ENCODE measurements at regions of chr5 and their contacts with region 1.

Region 1: DNA sequence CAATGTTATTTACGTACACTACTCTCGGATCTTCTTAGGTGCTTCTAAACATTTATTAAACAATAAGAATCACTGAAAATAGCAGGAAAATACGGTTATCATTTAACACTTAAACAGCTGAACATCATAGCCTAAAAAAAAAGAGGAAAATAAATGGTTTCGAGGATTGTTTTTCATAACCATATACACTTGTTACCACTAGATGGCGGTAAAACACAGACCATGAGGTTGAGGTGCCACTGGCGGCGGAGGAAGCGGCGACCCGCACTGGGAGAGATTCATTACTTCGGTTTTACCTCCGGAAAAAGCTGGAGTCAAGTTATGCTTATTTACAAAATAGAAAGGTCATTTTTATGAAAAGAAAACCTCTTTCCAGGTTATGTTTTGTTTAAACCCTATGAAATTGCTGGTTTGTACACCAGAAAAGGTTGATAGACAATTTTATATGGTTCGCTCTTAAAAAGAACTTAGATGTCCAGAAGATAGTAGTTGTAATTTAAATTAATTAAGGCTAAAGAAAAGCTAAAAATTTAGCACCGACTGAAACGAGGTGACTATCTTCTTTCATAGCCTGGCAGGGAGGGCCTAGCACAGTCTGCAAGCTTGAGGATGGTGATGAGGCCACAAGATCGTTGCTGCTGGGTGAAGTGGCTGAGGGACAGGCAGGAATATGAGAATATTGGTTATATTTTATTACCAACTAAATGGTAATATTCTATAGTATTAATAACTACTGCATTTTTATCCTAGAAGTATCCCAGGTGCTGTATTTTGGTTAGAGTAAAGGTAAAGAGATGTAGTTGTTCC is 605.7 kb downstream of the RAB3C start:
- DNase-seq: peak; percentile 73
- H3K4me3 ChIP-seq: peak overlapping the region in 1 of 3 experiments; percentile 33
- H3K27ac ChIP-seq: no peak overlapping the region
- H3K4me1 ChIP-seq: peaks cover 4% of the 10 kb centered on the region
- H3K27me3 ChIP-seq: no peaks in the 10 kb centered on the region
- CTCF ChIP-seq: peak; percentile 47 to 55
- POLR2A ChIP-seq: no peak

Region 2: GRCh38 chr5:59206132-59206581 is 17.5 kb after region 1 on chr5:
- CTCF ChIA-PET with region 1: interaction called, 13 read pairs
- POLR2A ChIA-PET with region 1: no interaction called
- dilution Hi-C with region 1: no loop called
- intact Hi-C with region 1: no loop called
- DNase-seq: peak; percentile 55
- H3K4me3 ChIP-seq: no peak overlapping the region
- H3K27ac ChIP-seq: no peak overlapping the region
- H3K4me1 ChIP-seq: peaks cover 14% of the 10 kb centered on the region
- H3K27me3 ChIP-seq: no peaks in the 10 kb centered on the region
- CTCF ChIP-seq: no peak
- POLR2A ChIP-seq: no peak

Region 3: GRCh38 chr5:59238126-59238902 is 49.7 kb after region 1 on chr5:
- CTCF ChIA-PET with region 1: interaction called, 12 read pairs
- POLR2A ChIA-PET with region 1: no interaction called
- dilution Hi-C with region 1: no loop called
- intact Hi-C with region 1: no loop called
- DNase-seq: no peak
- H3K4me3 ChIP-seq: no peak overlapping the region
- H3K27ac ChIP-seq: no peak overlapping the region
- H3K4me1 ChIP-seq: peaks cover 25% of the 10 kb centered on the region
- H3K27me3 ChIP-seq: no peaks in the 10 kb centered on the region
- CTCF ChIP-seq: no peak
- POLR2A ChIP-seq: no peak

Region 4: DNA sequence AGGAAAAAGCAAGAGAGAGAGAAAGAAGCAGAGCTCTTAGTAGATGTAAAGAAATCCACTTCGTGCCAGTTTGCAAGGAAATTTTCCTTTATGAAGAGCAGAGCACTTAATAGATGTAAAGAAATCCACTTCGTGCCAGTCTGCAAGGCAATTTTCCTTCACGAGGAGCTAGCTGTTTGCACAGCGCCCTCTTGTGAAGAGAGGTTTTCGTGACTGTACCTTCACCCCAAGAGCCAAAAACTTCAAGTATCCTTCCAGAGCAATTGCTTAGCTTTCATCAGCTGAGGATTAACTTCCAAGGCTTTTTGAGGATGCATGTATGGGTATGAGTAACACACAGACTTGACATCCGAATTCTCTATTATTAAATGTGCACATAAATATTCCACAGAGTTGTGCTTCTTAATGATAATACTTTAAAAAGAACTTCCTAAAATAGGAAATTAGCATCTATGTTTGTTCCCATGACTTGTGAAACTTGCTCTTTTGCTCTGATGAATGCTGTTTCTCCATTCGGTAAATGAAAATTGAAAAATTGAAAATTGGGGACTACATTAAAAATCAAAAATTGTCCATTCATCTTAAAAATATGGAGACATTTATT is 179.3 kb after region 1 on chr5:
- CTCF ChIA-PET with region 1: interaction called, 193 read pairs
- POLR2A ChIA-PET with region 1: no interaction called
- dilution Hi-C with region 1: no loop called
- intact Hi-C with region 1: loop called (anchors 1 kb)
- DNase-seq: peak; percentile 75
- H3K4me3 ChIP-seq: no peak overlapping the region
- H3K27ac ChIP-seq: no peak overlapping the region
- H3K4me1 ChIP-seq: no peaks in the 10 kb centered on the region
- H3K27me3 ChIP-seq: peaks cover 0 to 2% of the 10 kb centered on the region in 2 experiments
- CTCF ChIP-seq: peak; percentile 75 to 79
- POLR2A ChIP-seq: no peak

Region 5: DNA sequence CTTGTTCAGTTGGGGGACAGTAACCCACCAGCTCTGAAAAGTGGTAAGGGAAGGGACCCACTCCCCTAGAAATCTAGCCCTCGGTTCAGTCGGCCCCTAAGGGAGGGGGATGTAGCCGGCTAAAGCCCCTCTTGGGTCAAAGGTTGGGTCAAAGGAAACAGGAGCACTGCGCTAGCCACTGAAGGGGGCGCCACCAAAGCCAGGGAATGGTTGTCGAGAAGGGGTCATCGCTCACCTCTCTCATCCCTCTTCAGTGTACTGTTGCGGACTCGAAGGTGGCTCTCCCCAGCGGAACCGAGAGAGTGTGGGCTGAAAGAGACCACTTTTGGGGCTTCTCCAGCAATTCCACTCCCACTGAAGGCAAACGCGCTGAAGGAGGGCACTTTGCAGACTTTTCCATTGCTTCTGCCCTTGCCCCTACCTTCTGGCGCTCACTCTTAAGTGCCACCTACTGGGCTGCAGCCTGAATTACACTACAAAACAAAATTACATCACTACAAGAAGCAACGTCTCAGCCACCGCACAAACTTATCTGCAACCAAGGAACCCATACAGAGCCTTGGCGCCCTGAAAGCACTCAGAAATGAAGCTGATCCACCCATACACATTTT is 308.0 kb after region 1 on chr5:
- CTCF ChIA-PET with region 1: interaction called, 11 read pairs
- POLR2A ChIA-PET with region 1: no interaction called
- dilution Hi-C with region 1: no loop called
- intact Hi-C with region 1: no loop called
- DNase-seq: peak; percentile 11
- H3K4me3 ChIP-seq: no peak overlapping the region
- H3K27ac ChIP-seq: no peak overlapping the region
- H3K4me1 ChIP-seq: no peaks in the 10 kb centered on the region
- H3K27me3 ChIP-seq: peaks cover 0 to 2% of the 10 kb centered on the region in 2 experiments
- CTCF ChIP-seq: peak; percentile 43 to 50
- POLR2A ChIP-seq: no peak

Region 6: DNA sequence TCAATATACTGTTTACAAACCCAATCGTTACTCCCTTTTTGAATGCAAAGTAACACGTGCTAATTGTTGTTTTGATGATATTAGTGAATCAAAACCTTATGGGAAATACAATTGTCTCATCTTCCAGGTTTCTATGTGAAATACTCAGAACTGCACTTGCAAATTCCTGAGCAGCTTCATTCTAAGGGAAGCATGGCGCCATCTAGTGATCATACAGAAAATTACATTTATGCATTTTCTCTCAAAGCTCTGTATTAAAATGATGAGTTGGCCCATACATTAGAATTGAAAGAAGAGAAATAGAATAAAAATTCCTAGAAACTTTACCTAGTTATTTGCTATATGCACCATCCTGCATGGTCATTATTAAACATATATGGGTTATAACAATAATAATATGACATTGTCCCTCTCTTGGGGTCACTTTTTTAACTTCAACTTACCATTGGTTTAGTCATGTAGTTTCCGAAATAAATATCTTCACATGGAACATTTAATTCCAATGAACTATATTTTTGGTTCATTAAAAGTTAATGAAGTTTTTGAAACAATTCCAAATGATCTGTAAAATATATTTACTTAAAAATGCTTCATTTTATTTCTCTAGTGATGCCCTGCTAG is 484.9 kb after region 1 on chr5:
- CTCF ChIA-PET with region 1: interaction called, 14 read pairs
- POLR2A ChIA-PET with region 1: no interaction called
- dilution Hi-C with region 1: no loop called
- intact Hi-C with region 1: no loop called
- DNase-seq: peak; percentile 66
- H3K4me3 ChIP-seq: no peak overlapping the region
- H3K27ac ChIP-seq: no peak overlapping the region
- H3K4me1 ChIP-seq: no peaks in the 10 kb centered on the region
- H3K27me3 ChIP-seq: no peaks in the 10 kb centered on the region
- CTCF ChIP-seq: peak; percentile 38 to 46
- POLR2A ChIP-seq: no peak